A549 (cell line): ENCODE measurements at regions of chr12 and their contacts with region 1.

Region 1: GRCh38 chr12:76455582-76456345 is 103.8 kb downstream of the OSBPL8 start:
- DNase-seq: peak; percentile 49 to 91
- ATAC-seq: peak; percentile 95 to 98
- H3K4me3 ChIP-seq: peak overlapping the region; percentile 39
- H3K27ac ChIP-seq: peak overlapping the region; percentile 67 to 86
- H3K4me1 ChIP-seq: peaks cover 28% of the 10 kb centered on the region; the same call in 2 of the 3 replicates
- CTCF ChIP-seq: peak; percentile 89
- EP300 ChIP-seq: no peak
- POLR2A ChIP-seq: no peak
- RAD21 ChIP-seq: peak; percentile 91 to 95

Region 2: GRCh38 chr12:76470028-76470939 is 14.5 kb after region 1 on chr12:
- CTCF ChIA-PET with region 1: interaction called, 25 read pairs
- POLR2A ChIA-PET with region 1: no interaction called
- DNase-seq: peak; percentile 47 to 51
- ATAC-seq: peak; percentile 85 to 91
- H3K4me3 ChIP-seq: no peak overlapping the region
- H3K27ac ChIP-seq: no peak overlapping the region
- H3K4me1 ChIP-seq: peaks cover 12% of the 10 kb centered on the region
- CTCF ChIP-seq: no peak
- EP300 ChIP-seq: no peak
- POLR2A ChIP-seq: no peak
- RAD21 ChIP-seq: no peak

Region 3: GRCh38 chr12:76830436-76830835 is 374.7 kb after region 1 on chr12:
- CTCF ChIA-PET with region 1: no interaction called
- POLR2A ChIA-PET with region 1: no interaction called
- DNase-seq: no peak
- ATAC-seq: no peak
- H3K4me3 ChIP-seq: no peak overlapping the region
- H3K27ac ChIP-seq: no peak overlapping the region
- H3K4me1 ChIP-seq: no peaks in the 10 kb centered on the region
- CTCF ChIP-seq: no peak
- EP300 ChIP-seq: no peak
- POLR2A ChIP-seq: no peak
- RAD21 ChIP-seq: no peak